Heart right ventricle (tissue), 16 donors: ENCODE measurements at regions of chr3 and their contacts with region 1.

Region 1: DNA sequence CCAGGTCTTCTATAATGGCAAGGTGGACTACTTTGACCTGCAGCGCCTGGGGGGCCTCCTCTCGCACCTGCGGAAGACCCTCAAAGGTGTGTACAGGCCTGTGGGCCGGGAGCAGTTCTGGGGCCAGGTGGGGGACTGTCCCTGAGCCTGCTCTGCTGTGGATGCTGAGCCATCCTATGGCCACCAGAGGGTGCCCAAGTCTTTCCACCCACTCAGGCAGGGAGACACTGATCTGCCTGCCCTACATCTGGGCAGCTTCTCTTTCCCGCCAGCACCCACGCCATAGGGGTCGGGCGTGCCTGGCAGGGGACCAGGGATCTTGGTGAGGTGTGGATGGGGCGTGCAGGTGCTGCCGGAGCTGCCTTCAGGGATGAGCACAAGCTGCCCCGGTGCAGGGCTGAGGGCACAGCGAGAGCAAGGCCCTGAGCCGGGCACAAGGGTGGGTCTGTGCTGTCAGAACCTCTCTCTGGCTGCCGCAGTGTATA is 14.1 kb downstream of the RNF123 start:
- DNase-seq: peak; percentile 44
- ATAC-seq: peak; percentile 61 to 76 (median 67)
- H3K4me3 ChIP-seq: no peak overlapping the region
- H3K27ac ChIP-seq: no peak overlapping the region
- H3K4me1 ChIP-seq: peaks cover 0 to 23% (median 0%) of the 10 kb centered on the region in 9 donors
- H3K27me3 ChIP-seq: no peaks in the 10 kb centered on the region
- CTCF ChIP-seq: peak; percentile 47 to 85 (median 80)

Region 2: DNA sequence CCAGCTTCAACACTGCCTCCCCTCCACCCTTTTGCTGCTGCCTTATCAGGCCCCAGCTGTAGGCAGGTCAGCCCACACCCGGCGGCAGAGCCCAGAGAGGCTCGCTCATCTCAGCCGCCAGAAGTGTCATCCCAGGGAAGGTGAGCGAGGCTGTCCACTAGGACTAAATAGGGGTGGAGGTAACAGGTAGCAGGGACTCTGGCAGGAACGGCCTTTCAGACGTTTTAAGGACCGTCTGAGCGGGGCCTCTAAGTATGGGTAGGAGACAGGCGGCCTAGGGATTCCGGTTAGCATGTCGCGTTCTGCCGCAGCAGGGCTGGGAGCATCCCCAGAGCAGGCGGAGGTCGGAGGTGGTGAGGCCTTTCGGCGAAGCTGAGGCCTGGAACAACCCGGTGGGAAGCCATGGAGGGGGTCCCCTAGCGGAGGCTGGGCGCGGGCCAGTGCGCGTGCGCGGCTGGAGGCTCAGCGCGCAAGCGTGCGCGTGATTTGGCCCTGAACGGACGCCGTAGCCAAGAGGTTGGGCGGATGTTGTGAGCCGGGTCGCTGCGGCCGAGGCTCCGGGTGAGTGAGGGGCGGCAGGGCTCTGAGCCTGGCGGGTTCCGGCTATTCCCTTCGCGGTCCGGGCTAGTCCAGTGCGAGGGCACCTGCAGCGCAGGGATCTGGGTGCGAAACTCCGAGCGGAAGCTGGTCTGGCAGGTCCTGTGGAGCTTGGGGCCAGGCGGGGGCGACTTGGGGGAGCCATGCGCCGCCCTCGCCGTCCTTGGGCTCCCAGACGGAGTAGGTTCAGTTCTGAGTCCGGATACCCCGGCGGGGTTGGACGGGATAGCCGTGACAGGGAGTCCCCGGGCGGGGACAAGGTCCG is 14.2 kb before region 1 on chr3 and contains the starts of genes MST1 and RNF123:
- intact Hi-C with region 1: no loop called
- DNase-seq: peak; percentile 93 to 94
- ATAC-seq: peak; percentile 76 to 92 (median 88)
- H3K4me3 ChIP-seq: peak within 1 kb of the TSS; percentile 63 to 100 (median 97)
- H3K27ac ChIP-seq: peak within 1 kb of the TSS; percentile 11 to 92 (median 87)
- H3K4me1 ChIP-seq: peaks cover 4 to 48% (median 32%) of the 10 kb centered on the region in 9 donors
- H3K27me3 ChIP-seq: peaks cover 0 to 14% (median 0%) of the 10 kb centered on the region in 7 donors
- CTCF ChIP-seq: peak in 7 of 9 donors; percentile 24 to 62 (median 49)
- total RNA-seq, gene MST1: 2.3 to 5.1 (median 3.8) TPM
- total RNA-seq, gene RNF123: 41.5 to 61.8 (median 51.4) TPM

Region 3: GRCh38 chr3:49747792-49748480 is 44.5 kb after region 1 on chr3:
- intact Hi-C with region 1: no loop called
- DNase-seq: no peak
- ATAC-seq: no peak
- H3K4me3 ChIP-seq: no peak overlapping the region
- H3K27ac ChIP-seq: no peak overlapping the region
- H3K4me1 ChIP-seq: peaks cover 0 to 12% (median 0%) of the 10 kb centered on the region in 9 donors
- H3K27me3 ChIP-seq: no peaks in the 10 kb centered on the region
- CTCF ChIP-seq: no peak

Region 4: DNA sequence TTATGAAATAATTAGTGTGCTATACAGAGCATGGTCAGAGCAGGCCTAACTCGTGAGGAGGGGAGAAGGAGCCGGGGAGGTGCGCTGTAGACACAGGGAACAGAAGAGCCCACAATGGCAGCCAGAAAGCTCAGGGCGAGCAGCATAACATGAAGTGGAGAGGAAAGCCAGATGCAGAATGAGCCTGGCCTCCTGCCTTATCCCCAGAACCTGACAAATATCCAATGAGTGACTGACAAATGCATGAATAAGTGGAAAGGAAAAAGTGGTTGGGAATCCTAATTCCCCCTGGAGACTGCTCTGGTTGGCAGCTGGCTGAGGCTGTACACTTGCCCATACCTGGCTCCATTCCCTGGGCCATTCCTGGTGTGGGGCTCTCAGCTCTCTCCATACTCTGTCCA is 209.4 kb after region 1 on chr3:
- intact Hi-C with region 1: loop called in 6 of 10 experiments (anchors 5 to 10 kb)
- DNase-seq: no peak
- ATAC-seq: peak in 7 of 8 donors; percentile 17 to 79 (median 70)
- H3K4me3 ChIP-seq: no peak overlapping the region
- H3K27ac ChIP-seq: peak overlapping the region in 1 of 10 donors; percentile 11
- H3K4me1 ChIP-seq: peaks cover 0 to 4% (median 0%) of the 10 kb centered on the region in 9 donors
- H3K27me3 ChIP-seq: no peaks in the 10 kb centered on the region
- CTCF ChIP-seq: no peak